H1 (cell line): ENCODE measurements at regions of chr15 and their contacts with region 1.

Region 1: DNA sequence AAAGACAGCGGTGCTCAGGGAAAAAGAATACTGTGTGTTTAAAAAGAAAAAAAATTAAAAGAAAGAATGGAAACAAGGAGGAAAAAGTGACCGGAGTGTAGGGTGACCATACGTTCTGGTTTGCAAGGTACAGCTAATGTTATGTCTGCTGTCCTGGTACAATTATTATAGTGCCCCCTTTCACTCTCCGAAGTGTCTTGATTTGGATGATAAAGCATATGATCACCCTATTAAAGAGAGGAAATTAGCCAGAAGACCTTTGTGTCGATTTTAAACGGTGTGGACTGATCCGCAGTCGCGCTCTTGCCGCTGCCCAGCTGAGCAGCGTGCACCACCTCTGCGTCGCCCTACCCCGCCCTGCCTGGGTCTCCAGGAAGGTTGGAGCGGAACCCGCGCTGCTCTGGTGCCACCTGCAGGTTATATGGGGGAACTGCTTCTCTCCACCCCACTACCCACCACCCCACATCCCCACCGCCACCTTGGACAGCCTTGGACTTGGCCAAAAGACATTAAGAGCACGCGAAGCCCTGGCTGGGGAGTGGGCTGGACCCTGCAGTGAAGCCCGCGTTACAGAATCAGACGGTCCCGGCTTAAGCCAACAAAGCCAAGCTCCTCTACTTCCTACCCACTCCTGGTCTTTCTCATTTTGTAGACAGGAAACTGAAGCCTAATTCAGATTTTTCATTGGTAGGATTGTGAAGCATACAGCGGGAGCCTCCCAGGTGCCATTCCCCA is 41.2 kb upstream of the UBE2Q2 start:
- DNase-seq: peak; percentile 47 to 95
- H3K4me3 ChIP-seq: peak overlapping the region in 3 of 4 experiments; percentile 14 to 45 (median 26); a peak in 4 of 8 replicates
- H3K27ac ChIP-seq: no peak overlapping the region
- H3K4me1 ChIP-seq: no peaks in the 10 kb centered on the region; a peak in 1 of 7 replicates
- H3K27me3 ChIP-seq: peaks cover 0 to 9% (median 4%) of the 10 kb centered on the region in 4 experiments; a peak in 3 of 7 replicates
- CTCF ChIP-seq: peak; percentile 77 to 95 (median 94)
- EP300 ChIP-seq: no peak
- POLR2A ChIP-seq: no peak
- RAD21 ChIP-seq: peak; percentile 93 to 94

Region 2: DNA sequence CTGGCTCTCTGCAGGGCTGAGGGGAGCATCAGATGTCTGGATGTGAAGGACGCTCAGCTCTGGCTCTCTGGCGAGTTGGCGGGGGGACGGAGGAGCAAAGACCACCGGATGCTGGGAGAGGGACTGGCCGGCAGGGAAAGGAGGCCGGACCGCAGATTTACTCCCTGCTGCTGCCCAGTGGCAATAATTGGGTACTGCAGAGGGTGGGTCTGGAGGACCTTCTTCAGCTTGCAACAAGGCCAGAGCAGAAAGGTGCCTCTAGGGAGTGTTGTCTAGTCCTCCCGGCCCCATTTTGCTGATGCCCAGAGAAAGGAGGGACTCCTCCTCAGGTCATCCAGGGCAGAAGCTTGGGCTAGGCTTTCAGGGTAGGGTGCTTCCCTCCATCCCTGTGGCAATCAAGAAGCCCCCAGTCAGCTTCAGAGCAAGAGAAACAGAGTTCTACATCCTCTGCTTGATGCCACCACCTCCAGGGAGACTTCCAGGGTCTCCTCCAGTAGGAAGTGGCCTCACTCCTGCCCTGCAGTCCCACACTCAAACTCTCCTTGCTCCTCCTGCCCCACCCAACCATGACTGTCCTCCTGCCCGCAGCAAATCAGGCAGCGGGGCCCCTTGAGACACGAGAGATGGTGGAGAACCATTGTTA is 69.1 kb before region 1 on chr15:
- CTCF ChIA-PET with region 1: interaction called, 224 read pairs
- POLR2A ChIA-PET with region 1: no interaction called
- DNase-seq: peak; percentile 51 to 96
- H3K4me3 ChIP-seq: no peak overlapping the region
- H3K27ac ChIP-seq: no peak overlapping the region
- H3K4me1 ChIP-seq: peaks cover 2 to 7% (median 4%) of the 10 kb centered on the region in 4 experiments; a peak in 6 of 7 replicates
- H3K27me3 ChIP-seq: no peaks in the 10 kb centered on the region
- CTCF ChIP-seq: peak; percentile 81 to 91 (median 89)
- EP300 ChIP-seq: no peak
- POLR2A ChIP-seq: no peak
- RAD21 ChIP-seq: peak; percentile 54 to 69

Region 3: DNA sequence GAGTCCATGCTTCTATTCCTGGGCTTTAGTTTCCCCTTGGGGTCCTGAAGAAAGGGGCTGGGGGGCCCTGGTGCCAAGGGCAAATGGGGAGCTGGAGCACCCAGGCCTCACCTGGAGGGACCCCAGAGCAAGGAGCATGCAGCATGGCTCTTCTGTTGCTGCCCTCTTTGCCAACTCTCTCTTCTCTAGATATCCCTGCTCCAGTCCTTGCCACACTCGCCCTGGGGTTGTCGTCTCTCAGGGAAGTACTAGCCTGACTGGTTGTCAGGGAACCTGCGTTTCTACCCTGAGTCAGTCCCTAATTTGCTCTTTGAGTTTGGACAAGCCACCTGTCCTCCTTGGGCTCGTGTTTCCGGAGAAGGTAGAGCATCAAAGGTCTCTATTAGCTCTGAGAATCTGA is 22.5 kb before region 1 on chr15:
- CTCF ChIA-PET with region 1: interaction called, 83 read pairs
- POLR2A ChIA-PET with region 1: no interaction called
- DNase-seq: no peak
- H3K4me3 ChIP-seq: no peak overlapping the region
- H3K27ac ChIP-seq: no peak overlapping the region
- H3K4me1 ChIP-seq: peaks cover 0 to 8% (median 5%) of the 10 kb centered on the region in 4 experiments; a peak in 4 of 7 replicates
- H3K27me3 ChIP-seq: no peaks in the 10 kb centered on the region
- CTCF ChIP-seq: no peak
- EP300 ChIP-seq: no peak
- POLR2A ChIP-seq: no peak
- RAD21 ChIP-seq: no peak

Region 4: DNA sequence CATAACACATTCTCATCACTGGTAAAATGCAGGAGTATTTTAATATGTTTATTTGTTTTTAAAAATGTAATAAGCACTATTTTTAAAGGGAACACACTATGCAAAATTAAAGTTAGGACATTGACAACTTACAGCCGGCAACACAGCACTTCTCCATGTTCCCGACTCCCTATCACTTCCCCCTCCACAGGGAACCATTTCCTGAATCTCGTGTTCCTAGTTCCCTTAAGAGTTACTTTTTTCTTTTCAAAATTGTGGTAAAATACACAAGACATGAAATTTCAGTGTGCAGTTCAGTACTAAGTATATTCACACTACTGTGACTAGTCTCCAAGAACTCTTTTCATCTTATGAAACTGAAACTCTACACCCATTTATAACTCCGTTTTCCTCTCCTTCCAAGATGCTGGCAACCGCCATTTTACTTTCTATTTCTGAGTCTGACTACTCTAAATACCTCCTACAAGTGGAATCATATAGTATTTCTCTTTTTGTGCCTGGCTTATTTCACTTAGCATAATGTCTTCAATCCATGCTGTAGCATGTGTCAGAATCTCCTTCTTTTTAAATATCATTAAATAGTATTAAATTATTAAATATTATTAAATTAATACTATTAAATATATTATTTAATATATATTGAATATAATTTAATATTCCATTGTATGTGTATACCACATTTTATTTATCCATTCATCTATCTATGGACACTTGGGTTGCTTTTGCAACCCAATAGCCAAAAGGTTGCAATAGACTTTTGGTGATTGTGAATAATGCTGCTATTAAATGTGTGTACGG is 15.3 kb after region 1 on chr15:
- CTCF ChIA-PET with region 1: interaction called, 29 read pairs
- POLR2A ChIA-PET with region 1: no interaction called
- DNase-seq: no peak
- H3K4me3 ChIP-seq: no peak overlapping the region
- H3K27ac ChIP-seq: no peak overlapping the region
- H3K4me1 ChIP-seq: no peaks in the 10 kb centered on the region
- H3K27me3 ChIP-seq: no peaks in the 10 kb centered on the region
- CTCF ChIP-seq: no peak
- EP300 ChIP-seq: no peak
- POLR2A ChIP-seq: no peak
- RAD21 ChIP-seq: no peak

Region 5: DNA sequence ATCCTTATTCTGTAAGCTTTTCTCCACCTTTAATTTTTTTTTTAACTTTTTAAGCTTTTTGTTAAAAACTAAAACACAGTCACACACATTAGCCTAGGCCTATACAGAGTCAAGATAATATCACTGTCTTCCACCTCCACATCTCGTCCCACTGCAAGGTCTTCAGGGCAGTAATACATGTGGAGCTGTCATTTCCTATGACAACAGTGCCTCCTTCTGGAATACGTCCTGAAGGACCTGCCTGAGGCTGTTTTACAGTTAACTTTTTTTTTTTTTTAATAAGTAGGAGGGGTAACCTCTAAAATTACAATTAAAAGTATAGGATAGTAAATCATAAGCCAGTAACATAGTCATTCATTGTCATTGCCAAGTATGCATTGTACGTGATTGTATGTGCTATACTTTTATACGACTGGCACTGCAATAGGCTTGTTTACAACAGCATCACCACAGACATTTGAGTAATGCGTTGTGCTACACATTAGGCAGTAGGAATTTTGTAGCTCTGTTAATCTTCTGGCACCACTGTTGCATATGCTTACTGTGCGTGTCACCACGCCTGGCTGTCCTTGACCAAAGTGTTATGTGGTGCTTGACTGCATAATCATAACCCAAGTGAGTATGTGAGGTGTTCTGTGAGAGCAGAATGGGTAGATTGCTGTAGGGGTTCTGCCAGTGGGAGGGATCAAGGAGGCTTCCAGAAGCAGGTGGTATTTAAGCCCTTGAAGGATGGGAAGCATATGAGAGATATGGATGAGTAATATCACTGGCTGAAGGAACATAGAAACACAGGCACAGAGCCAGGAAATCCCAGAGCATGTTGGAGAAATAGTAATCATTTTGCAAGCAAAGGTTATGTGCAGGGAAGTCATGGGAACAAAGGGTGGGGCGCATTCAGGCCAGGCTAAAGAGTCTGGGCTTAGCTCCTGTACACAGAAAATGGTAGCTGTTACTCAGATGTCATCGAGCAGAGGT is 120.0 kb after region 1 on chr15:
- CTCF ChIA-PET with region 1: interaction called, 110 read pairs
- POLR2A ChIA-PET with region 1: no interaction called
- DNase-seq: no peak
- H3K4me3 ChIP-seq: no peak overlapping the region
- H3K27ac ChIP-seq: no peak overlapping the region
- H3K4me1 ChIP-seq: peaks cover 0 to 8% (median 1%) of the 10 kb centered on the region in 4 experiments; a peak in 1 of 7 replicates
- H3K27me3 ChIP-seq: no peaks in the 10 kb centered on the region
- CTCF ChIP-seq: peak in 2 of 3 experiments; percentile 56 to 60; a peak in 3 of 4 replicates
- EP300 ChIP-seq: no peak
- POLR2A ChIP-seq: no peak
- RAD21 ChIP-seq: peak; percentile 80 to 84